ENCODE measurements at regions of chr9 and their contacts with region 1.

Region 1: DNA sequence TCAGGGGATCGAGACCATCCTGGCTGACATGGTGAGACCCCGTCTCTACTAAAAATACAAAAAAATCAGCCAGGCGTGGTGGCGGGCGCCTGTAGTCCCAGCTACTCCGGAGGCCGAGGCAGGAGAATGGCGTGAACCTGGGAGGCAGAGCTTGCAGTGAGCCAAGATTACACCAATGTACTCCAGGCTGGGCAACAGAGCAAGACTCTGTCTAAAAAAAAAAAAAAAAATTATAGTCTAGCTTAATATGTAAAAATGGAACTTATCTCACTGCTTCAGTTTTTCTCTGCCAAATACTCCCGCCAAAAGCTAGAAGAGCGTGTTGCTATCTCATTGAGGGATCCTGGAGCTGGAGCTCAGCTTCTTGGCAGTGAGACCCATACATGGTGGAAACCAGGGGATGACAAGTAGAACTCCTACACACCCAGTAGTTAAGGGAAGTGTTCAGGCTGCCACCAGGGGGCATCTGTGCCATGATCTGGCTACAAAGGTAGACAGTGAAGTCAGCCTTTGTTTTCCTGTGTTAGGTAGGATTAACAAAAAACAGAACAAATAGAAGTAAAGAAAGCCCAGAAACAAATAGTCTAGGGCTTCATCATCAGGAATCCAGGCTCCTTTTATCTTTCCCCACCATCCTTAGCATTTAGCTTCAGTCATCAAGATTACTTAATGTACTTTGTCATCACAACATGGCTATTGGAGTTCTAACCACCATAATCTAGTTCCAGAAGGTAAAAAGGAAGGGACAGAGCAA is 33.6 kb upstream of the GLIPR2 start:
- DNase-seq: peak; percentile 94
- ATAC-seq: peak; percentile 100
- H3K4me3 Mint-ChIP-seq: no peak overlapping the region
- H3K27ac Mint-ChIP-seq: no peak overlapping the region
- H3K4me1 Mint-ChIP-seq: peaks cover 6% of the 10 kb centered on the region
- H3K27me3 Mint-ChIP-seq: no peaks in the 10 kb centered on the region

Region 2: GRCh38 chr9:36041506-36041905 is 61.4 kb before region 1 on chr9:
- CTCF ChIA-PET with region 1: no interaction called
- POLR2A ChIA-PET with region 1: no interaction called
- intact Hi-C with region 1: no loop called
- DNase-seq: no peak
- ATAC-seq: no peak
- H3K4me3 Mint-ChIP-seq: peak overlapping the region; percentile 20
- H3K27ac Mint-ChIP-seq: peak overlapping the region; percentile 74
- H3K4me1 Mint-ChIP-seq: peaks cover 60% of the 10 kb centered on the region
- H3K27me3 Mint-ChIP-seq: no peaks in the 10 kb centered on the region

Region 3: DNA sequence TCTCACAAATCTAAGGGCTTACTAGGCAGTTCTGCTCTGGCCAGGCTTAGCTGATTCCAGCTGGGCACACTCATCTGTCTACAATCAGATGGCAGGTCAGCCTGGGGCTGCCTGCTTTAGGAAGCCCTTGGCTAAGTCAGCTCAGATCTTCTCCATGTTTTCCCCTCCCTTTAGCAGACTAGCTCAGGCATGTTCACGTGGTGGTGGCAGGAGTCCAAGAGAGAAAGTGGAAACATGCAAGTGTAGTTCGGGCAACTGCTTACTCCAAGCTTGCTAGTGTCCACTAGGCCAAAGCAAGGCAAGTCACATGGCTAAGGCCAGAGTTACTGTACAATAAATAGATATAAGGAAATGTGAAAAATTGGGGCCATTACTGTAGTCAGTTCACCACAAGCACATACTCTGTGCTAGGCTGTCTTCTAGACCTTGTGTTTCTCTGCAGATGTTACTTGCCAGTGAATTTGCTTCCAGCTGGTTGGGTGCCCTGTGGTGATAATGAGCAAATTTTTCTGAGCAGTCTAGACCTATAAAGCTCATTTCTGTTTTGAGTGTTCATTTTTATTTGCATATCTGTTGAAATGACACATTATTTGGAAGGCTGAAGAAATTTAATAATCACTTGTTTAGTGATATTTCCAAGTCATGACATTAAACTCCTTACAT is 27.9 kb before region 1 on chr9:
- CTCF ChIA-PET with region 1: interaction called, 10 read pairs
- POLR2A ChIA-PET with region 1: no interaction called
- intact Hi-C with region 1: no loop called
- DNase-seq: no peak
- ATAC-seq: no peak
- H3K4me3 Mint-ChIP-seq: no peak overlapping the region
- H3K27ac Mint-ChIP-seq: no peak overlapping the region
- H3K4me1 Mint-ChIP-seq: no peaks in the 10 kb centered on the region
- H3K27me3 Mint-ChIP-seq: no peaks in the 10 kb centered on the region

Region 4: DNA sequence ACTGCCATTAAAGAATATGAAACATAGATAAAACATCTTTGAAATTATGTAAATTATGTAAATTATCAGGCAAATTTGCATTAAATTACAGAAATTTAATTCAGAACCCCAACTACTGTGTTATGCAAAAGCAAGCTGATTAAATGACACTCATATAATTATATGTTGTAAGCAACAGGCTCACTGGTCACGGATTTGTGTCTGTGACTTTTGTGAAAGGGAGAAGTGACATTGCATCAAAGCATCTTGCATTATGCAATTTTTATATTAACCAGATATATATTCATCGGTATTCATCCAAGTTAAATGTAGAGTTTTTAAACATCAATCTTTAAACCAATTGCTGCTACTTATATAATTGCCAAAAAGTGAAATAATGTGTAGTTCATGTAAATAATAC is 20.6 kb after region 1 on chr9:
- CTCF ChIA-PET with region 1: interaction called, 94 read pairs
- POLR2A ChIA-PET with region 1: no interaction called
- intact Hi-C with region 1: no loop called
- DNase-seq: no peak
- ATAC-seq: no peak
- H3K4me3 Mint-ChIP-seq: no peak overlapping the region
- H3K27ac Mint-ChIP-seq: no peak overlapping the region
- H3K4me1 Mint-ChIP-seq: peaks cover 17% of the 10 kb centered on the region
- H3K27me3 Mint-ChIP-seq: no peaks in the 10 kb centered on the region

Region 5: GRCh38 chr9:36136272-36136893 is 33.5 kb after region 1 on chr9 and contains the start of gene GLIPR2:
- CTCF ChIA-PET with region 1: interaction called, 15 read pairs
- POLR2A ChIA-PET with region 1: no interaction called
- intact Hi-C with region 1: loop called (anchors 2 to 5 kb)
- DNase-seq: peak; percentile 88
- ATAC-seq: peak; percentile 96
- H3K4me3 Mint-ChIP-seq: peak within 1 kb of the TSS; percentile 81
- H3K27ac Mint-ChIP-seq: peak within 1 kb of the TSS; percentile 48
- H3K4me1 Mint-ChIP-seq: peaks cover 45% of the 10 kb centered on the region
- H3K27me3 Mint-ChIP-seq: no peaks in the 10 kb centered on the region
- total RNA-seq, gene GLIPR2: 13.7 to 18.4 TPM

Region 6: GRCh38 chr9:36144309-36145232 is 41.7 kb after region 1 on chr9:
- CTCF ChIA-PET with region 1: interaction called, 14 read pairs
- POLR2A ChIA-PET with region 1: no interaction called
- intact Hi-C with region 1: loop called in 1 of 2 experiments (anchors 5 kb)
- DNase-seq: no peak
- ATAC-seq: peak; percentile 44
- H3K4me3 Mint-ChIP-seq: peak overlapping the region; percentile 67
- H3K27ac Mint-ChIP-seq: peak overlapping the region; percentile 89
- H3K4me1 Mint-ChIP-seq: peaks cover 93% of the 10 kb centered on the region
- H3K27me3 Mint-ChIP-seq: no peaks in the 10 kb centered on the region

Region 7: GRCh38 chr9:36166101-36166927 is 63.4 kb after region 1 on chr9:
- CTCF ChIA-PET with region 1: interaction called, 246 read pairs
- POLR2A ChIA-PET with region 1: no interaction called
- intact Hi-C with region 1: loop called (anchors 1 kb)
- DNase-seq: peak; percentile 90
- ATAC-seq: peak; percentile 97
- H3K4me3 Mint-ChIP-seq: peak overlapping the region; percentile 69
- H3K27ac Mint-ChIP-seq: peak overlapping the region; percentile 31
- H3K4me1 Mint-ChIP-seq: peaks cover 6% of the 10 kb centered on the region
- H3K27me3 Mint-ChIP-seq: no peaks in the 10 kb centered on the region

Region 8: GRCh38 chr9:36328798-36329411 is 226.0 kb after region 1 on chr9:
- CTCF ChIA-PET with region 1: interaction called, 7 read pairs
- POLR2A ChIA-PET with region 1: interaction called, 3 read pairs
- intact Hi-C with region 1: loop called (anchors 1 to 2 kb)
- DNase-seq: peak; percentile 58
- ATAC-seq: peak; percentile 81
- H3K4me3 Mint-ChIP-seq: no peak overlapping the region
- H3K27ac Mint-ChIP-seq: no peak overlapping the region
- H3K4me1 Mint-ChIP-seq: no peaks in the 10 kb centered on the region
- H3K27me3 Mint-ChIP-seq: no peaks in the 10 kb centered on the region